ENCODE measurements at regions of chr3 and their contacts with region 1.

Region 1: DNA sequence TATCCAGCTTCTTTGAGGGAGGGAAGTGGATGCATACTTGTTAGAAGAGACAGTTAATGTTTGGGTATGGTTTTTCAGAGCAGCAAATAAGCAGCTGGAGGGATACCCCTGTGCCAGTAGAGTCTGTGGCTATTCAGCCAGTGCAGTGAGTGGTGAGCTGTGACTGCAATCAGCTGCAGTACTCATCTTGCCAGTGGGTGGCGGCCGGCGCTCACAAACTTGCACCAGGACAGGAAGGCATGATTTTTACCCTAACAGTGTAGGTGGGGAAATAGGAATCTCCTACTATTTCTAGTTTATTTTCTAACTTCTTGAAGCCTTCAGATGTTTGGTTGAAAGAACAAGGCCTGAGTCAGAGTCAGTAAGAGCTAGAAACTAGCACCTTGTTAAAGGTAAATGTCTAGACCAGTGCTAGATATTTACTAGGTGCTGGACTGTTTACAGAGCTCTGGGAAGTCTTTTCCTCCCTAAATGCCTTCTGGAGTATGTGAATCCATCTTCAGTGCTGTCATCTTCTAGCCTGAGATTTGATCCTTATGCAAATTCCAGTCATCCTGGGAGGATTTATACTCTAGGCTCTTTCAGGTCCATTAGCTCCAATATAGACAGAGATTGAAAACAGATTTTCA is 23.6 kb downstream of the TIMP4 start:
- DNase-seq: peak; percentile 58 to 86 (median 72)
- ATAC-seq: peak; percentile 65 to 90 (median 86)
- H3K4me3 ChIP-seq: no peak overlapping the region
- H3K27ac ChIP-seq: no peak overlapping the region
- H3K4me1 ChIP-seq: peaks cover 0 to 25% (median 14%) of the 10 kb centered on the region in 12 donors
- H3K27me3 ChIP-seq: peaks cover 0 to 18% (median 0%) of the 10 kb centered on the region in 9 donors
- CTCF ChIP-seq: peak; percentile 82 to 94 (median 90)
- POLR2A ChIP-seq: no peak

Region 2: DNA sequence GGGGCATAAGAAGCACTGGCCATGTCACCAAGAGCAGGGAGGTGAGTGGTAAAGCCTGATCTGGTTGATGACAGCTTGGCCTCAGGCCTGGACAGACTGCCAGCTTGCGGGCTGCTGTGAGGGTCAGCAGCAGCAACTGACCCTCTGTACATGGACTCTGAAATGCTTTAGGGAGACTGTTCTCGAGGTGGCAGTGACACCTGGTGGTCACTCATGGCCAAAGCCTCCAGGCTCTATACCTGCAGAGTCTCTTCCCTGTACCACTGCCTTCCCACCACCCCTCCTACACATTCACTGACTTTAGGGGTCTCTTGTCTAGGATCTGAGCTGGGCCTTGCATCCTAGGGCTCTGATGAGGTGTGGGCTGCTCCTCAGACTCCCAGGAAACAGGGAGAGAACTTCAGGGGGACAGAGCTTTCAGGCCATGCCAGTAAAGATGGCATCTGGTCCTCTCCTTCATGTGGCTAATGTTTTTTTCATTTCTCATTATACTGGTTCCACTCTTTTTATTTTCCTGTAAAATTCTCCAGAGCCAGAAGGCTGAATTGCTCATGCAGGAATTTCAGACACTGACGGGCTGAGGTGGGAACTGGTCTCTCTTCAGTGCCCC is 40.8 kb after region 1 on chr3:
- intact Hi-C with region 1: loop called (anchors 1 to 2 kb)
- DNase-seq: peak; percentile 56 to 74 (median 70)
- ATAC-seq: peak; percentile 82 to 90 (median 84)
- H3K4me3 ChIP-seq: no peak overlapping the region
- H3K27ac ChIP-seq: no peak overlapping the region
- H3K4me1 ChIP-seq: peaks cover 9 to 55% (median 29%) of the 10 kb centered on the region in 12 donors
- H3K27me3 ChIP-seq: no peaks in the 10 kb centered on the region
- CTCF ChIP-seq: peak; percentile 77 to 93 (median 88)
- POLR2A ChIP-seq: no peak

Region 3: DNA sequence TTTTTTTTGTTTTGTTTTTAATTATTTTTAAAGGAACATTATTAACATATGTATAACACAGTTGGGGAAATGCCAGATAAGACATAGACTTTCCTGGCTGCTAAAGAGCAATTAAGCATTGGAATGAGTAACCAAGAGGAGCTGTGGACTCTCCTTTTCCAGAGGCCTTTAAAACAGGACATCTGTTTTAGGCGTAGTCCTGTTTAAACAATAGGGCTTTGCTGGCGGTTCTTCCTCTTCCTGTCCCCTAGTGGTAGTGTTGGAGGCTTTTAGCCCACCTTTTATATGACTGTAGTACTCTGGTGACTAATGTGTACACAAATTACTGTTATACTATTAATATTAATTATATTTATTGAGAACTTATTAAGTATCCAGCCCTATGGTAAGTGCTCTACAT is 235.6 kb after region 1 on chr3:
- intact Hi-C with region 1: loop called in 2 of 10 experiments (anchors 5 kb)
- DNase-seq: peak in 1 of 5 donors; percentile 24
- ATAC-seq: peak; percentile 67 to 93 (median 80)
- H3K4me3 ChIP-seq: no peak overlapping the region
- H3K27ac ChIP-seq: peak overlapping the region in 9 of 12 donors; percentile 2 to 68 (median 55)
- H3K4me1 ChIP-seq: peaks cover 0 to 43% (median 17%) of the 10 kb centered on the region in 12 donors
- H3K27me3 ChIP-seq: no peaks in the 10 kb centered on the region
- CTCF ChIP-seq: peak in 11 of 12 donors; percentile 16 to 52 (median 34)
- POLR2A ChIP-seq: no peak

Region 4: GRCh38 chr3:12484198-12484974 is 349.2 kb after region 1 on chr3 and contains the start of gene TSEN2:
- intact Hi-C with region 1: loop called (anchors 1 to 2 kb)
- DNase-seq: peak; percentile 92 to 98 (median 95)
- ATAC-seq: peak; percentile 88 to 96 (median 95)
- H3K4me3 ChIP-seq: peak within 1 kb of the TSS; percentile 58 to 94 (median 78)
- H3K27ac ChIP-seq: peak within 1 kb of the TSS; percentile 44 to 86 (median 82)
- H3K4me1 ChIP-seq: peaks cover 0 to 41% (median 19%) of the 10 kb centered on the region in 12 donors
- H3K27me3 ChIP-seq: no peaks in the 10 kb centered on the region
- CTCF ChIP-seq: peak in 6 of 12 donors; percentile 10 to 43 (median 35)
- POLR2A ChIP-seq: peak in 1 of 2 donors; percentile 94
- total RNA-seq, gene TSEN2: 14.3 to 21.6 (median 18.4) TPM